Mammary epithelial cell (primary cell): ENCODE measurements at regions of chr3 and their contacts with region 1.

Region 1: DNA sequence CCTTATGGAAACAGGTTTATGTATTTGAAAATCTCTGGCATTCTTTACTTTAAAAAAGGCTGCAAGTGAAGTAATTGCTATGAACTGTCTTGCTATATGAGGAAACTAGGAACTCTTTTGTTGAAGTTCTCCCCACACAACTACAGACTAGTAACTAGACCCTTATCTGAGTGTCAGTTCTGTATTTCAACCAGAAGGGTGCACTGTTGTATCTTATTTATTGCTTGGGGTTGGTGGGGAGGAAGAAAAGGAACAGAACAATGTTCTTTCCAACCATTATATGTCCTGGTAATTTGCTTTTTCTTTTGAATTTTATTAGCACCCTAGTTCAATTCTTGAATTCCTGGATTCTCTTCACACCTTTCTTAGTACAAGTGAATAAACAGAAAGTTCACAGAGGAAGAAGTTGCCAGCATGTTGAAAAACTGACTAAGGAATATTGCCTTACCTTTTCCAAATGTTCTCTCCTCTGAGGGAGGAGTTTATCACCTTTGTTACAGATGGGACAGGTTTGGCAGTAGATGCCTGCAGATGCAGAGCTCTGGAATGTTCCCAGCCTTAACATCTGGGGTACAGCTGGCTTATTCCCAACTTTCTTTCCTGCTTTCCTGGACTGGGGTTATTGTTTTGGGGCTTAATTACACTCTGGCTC is 162.4 kb upstream of the CFAP20DC start:
- DNase-seq: peak; percentile 62
- H3K4me3 ChIP-seq: no peak overlapping the region
- H3K27ac ChIP-seq: peak overlapping the region; percentile 40
- H3K4me1 ChIP-seq: peaks cover 12% of the 10 kb centered on the region
- H3K27me3 ChIP-seq: no peaks in the 10 kb centered on the region
- CTCF ChIP-seq: peak; percentile 68 to 72

Region 2: DNA sequence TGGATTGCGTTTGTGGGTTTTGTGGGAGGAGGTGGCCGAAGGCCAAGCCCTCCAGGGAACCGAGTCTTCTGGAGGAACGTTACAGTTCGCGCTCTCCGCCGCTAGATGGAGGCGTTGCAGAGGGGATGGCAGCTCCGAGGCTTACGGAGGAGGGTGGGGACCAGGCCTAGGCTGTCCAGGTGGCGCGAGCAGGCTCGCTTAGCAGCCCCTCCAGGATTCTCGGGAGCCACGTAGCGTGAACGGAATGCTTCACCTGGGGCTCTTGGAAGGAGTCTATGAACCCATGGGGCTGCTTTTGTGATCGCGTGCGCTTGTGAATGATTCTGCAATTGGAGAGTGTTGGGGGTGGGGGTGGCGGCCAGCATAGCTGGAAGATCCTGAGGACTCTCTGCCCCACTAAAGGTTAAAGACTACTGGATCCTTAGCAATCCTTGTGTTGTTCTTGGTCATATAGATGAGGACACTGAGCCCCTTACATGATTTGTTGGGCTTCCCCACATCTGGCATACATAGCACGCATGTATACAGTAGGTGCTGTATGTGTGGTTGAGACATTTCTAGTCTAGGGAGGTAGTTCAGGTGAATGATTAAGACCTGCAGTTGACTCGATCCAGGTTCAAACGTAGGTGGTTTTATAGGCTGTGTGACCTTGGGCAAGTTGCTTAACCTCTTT is 571.4 kb before region 1 on chr3:
- CTCF ChIA-PET with region 1: no interaction called
- dilution Hi-C with region 1: no loop called
- in situ Hi-C with region 1: no loop called
- intact Hi-C with region 1: loop called (anchors 5 kb)
- DNase-seq: peak; percentile 64
- H3K4me3 ChIP-seq: no peak overlapping the region
- H3K27ac ChIP-seq: no peak overlapping the region
- H3K4me1 ChIP-seq: peaks cover 10% of the 10 kb centered on the region
- H3K27me3 ChIP-seq: no peaks in the 10 kb centered on the region
- CTCF ChIP-seq: peak; percentile 75 to 96

Region 3: GRCh38 chr3:59143447-59143846 is 68.8 kb before region 1 on chr3:
- CTCF ChIA-PET with region 1: no interaction called
- dilution Hi-C with region 1: no loop called
- in situ Hi-C with region 1: no loop called
- intact Hi-C with region 1: no loop called
- DNase-seq: peak; percentile 30
- H3K4me3 ChIP-seq: no peak overlapping the region
- H3K27ac ChIP-seq: no peak overlapping the region
- H3K4me1 ChIP-seq: peaks cover 13% of the 10 kb centered on the region
- H3K27me3 ChIP-seq: no peaks in the 10 kb centered on the region
- CTCF ChIP-seq: peak; percentile 23 to 40

Region 4: GRCh38 chr3:59286791-59287531 is 74.7 kb after region 1 on chr3:
- CTCF ChIA-PET with region 1: interaction called, 3 read pairs
- dilution Hi-C with region 1: no loop called
- in situ Hi-C with region 1: no loop called
- intact Hi-C with region 1: loop called (anchors 5 kb)
- DNase-seq: peak; percentile 85
- H3K4me3 ChIP-seq: no peak overlapping the region
- H3K27ac ChIP-seq: peak overlapping the region; percentile 41
- H3K4me1 ChIP-seq: peaks cover 41% of the 10 kb centered on the region
- H3K27me3 ChIP-seq: no peaks in the 10 kb centered on the region
- CTCF ChIP-seq: peak in 1 of 2 donors; percentile 14

Region 5: DNA sequence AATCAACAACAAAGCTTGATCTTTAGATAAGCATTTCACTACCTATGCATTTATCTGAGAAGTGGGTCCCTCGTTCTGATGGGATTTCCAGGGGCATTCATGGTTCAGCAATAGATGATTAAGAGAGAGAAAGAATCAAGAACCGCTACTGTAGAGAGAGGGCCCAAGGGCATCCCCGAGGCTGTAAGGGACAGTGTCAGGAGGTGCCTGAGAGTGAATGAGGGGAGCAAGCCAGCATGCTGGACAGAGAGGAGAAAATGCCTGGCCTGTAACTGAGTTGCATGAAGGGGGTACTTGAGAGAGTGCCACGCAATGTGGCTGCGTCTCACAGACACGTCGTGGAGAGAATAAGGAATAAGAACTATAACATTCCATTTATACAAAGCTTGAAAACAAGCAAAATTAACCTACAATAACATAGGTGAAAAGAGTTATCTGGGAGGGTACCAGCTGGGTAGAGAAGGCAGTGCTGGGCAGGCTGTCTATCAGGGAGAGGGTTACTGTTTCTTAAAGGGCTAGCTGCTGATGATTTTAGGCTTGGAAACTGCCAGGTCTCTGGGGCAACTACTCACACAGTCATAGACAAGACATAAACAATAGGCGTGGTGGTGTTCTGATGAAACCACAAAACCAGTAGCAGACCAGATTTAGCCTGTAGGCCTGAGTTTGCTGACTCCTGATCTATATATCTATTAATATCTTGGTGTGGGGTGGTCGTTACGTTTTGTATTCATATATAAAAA is 212.2 kb after region 1 on chr3:
- CTCF ChIA-PET with region 1: no interaction called
- dilution Hi-C with region 1: no loop called
- in situ Hi-C with region 1: no loop called
- intact Hi-C with region 1: loop called (anchors 5 kb)
- DNase-seq: peak; percentile 92
- H3K4me3 ChIP-seq: no peak overlapping the region
- H3K27ac ChIP-seq: peak overlapping the region; percentile 59
- H3K4me1 ChIP-seq: peaks cover 40% of the 10 kb centered on the region
- H3K27me3 ChIP-seq: no peaks in the 10 kb centered on the region
- CTCF ChIP-seq: no peak

Region 6: GRCh38 chr3:59575113-59576001 is 363.1 kb after region 1 on chr3:
- CTCF ChIA-PET with region 1: no interaction called
- dilution Hi-C with region 1: no loop called
- in situ Hi-C with region 1: loop called in 1 of 2 experiments (anchors 10 kb)
- intact Hi-C with region 1: loop called (anchors 1 kb)
- DNase-seq: peak; percentile 70
- H3K4me3 ChIP-seq: no peak overlapping the region
- H3K27ac ChIP-seq: no peak overlapping the region
- H3K4me1 ChIP-seq: peaks cover 30% of the 10 kb centered on the region
- H3K27me3 ChIP-seq: no peaks in the 10 kb centered on the region
- CTCF ChIP-seq: peak; percentile 95 to 97

Region 7: GRCh38 chr3:59857589-59858346 is 645.5 kb after region 1 on chr3:
- CTCF ChIA-PET with region 1: interaction called, 3 read pairs
- dilution Hi-C with region 1: no loop called
- in situ Hi-C with region 1: loop called in 1 of 2 experiments (anchors 25 kb)
- intact Hi-C with region 1: loop called (anchors 1 kb)
- DNase-seq: peak; percentile 61
- H3K4me3 ChIP-seq: no peak overlapping the region
- H3K27ac ChIP-seq: no peak overlapping the region
- H3K4me1 ChIP-seq: peaks cover 4% of the 10 kb centered on the region
- H3K27me3 ChIP-seq: no peaks in the 10 kb centered on the region
- CTCF ChIP-seq: peak; percentile 87 to 96